ENCODE measurements at regions of chr9 and their contacts with region 1.

Region 1: GRCh38 chr9:2241836-2242741 is 226.9 kb downstream of the SMARCA2 start:
- DNase-seq: peak; percentile 41 to 62 (median 57)
- H3K4me3 ChIP-seq: peak overlapping the region in 1 of 2 donors; percentile 52
- H3K4me3 Mint-ChIP-seq: peak overlapping the region; percentile 78 to 87 (median 82)
- H3K27ac ChIP-seq: no peak overlapping the region
- H3K27ac Mint-ChIP-seq: peak overlapping the region in 3 of 7 donors; percentile 19 to 71 (median 31)
- H3K4me1 ChIP-seq: peaks cover 18% of the 10 kb centered on the region
- H3K4me1 Mint-ChIP-seq: peaks cover 8 to 18% (median 13%) of the 10 kb centered on the region in 4 donors
- H3K27me3 ChIP-seq: peaks cover 4% of the 10 kb centered on the region
- H3K27me3 Mint-ChIP-seq: peaks cover 5 to 10% of the 10 kb centered on the region in 2 donors

Region 2: DNA sequence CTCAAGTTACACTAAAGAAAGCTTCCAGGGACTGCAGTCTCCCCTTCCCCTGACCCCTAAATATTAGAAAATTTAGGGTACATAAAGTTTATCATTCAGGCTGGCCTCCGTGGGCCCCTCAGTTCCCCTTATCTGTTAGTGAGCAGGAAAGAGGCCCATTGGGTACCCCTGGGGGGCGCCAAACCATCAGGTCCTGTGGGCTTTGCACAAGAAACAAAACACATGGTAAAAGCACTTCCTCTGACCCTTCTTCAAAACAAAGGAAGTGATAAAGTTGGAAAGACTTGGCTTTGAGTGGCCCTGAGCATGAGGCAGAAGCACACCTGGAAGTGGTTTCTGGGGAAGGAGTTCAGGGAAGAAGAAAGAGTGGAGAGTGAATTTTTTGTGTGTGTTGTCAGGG is 14.0 kb before region 1 on chr9:
- CTCF ChIA-PET with region 1: no interaction called
- POLR2A ChIA-PET with region 1: no interaction called
- intact Hi-C with region 1: no loop called
- DNase-seq: no peak
- H3K4me3 ChIP-seq: no peak overlapping the region
- H3K4me3 Mint-ChIP-seq: no peak overlapping the region
- H3K27ac ChIP-seq: no peak overlapping the region
- H3K27ac Mint-ChIP-seq: no peak overlapping the region
- H3K4me1 ChIP-seq: no peaks in the 10 kb centered on the region
- H3K4me1 Mint-ChIP-seq: no peaks in the 10 kb centered on the region
- H3K27me3 ChIP-seq: no peaks in the 10 kb centered on the region
- H3K27me3 Mint-ChIP-seq: no peaks in the 10 kb centered on the region

Region 3: GRCh38 chr9:2291980-2292665 is 50.0 kb after region 1 on chr9:
- CTCF ChIA-PET with region 1: no interaction called
- POLR2A ChIA-PET with region 1: no interaction called
- intact Hi-C with region 1: loop called (anchors 10 kb)
- DNase-seq: no peak
- H3K4me3 ChIP-seq: no peak overlapping the region
- H3K4me3 Mint-ChIP-seq: no peak overlapping the region
- H3K27ac ChIP-seq: no peak overlapping the region
- H3K27ac Mint-ChIP-seq: no peak overlapping the region
- H3K4me1 ChIP-seq: no peaks in the 10 kb centered on the region
- H3K4me1 Mint-ChIP-seq: no peaks in the 10 kb centered on the region
- H3K27me3 ChIP-seq: no peaks in the 10 kb centered on the region
- H3K27me3 Mint-ChIP-seq: peaks cover 12 to 19% of the 10 kb centered on the region in 2 donors